Activated B cell treated with CpG ODN at 0.5 μM for 24 hours (primary cell): ENCODE measurements at regions of chr3 and their contacts with region 1.

Region 1: GRCh38 chr3:167705840-167706239 is 28.9 kb downstream of the PDCD10 start:
- DNase-seq: no peak
- ATAC-seq: no peak
- H3K4me3 Mint-ChIP-seq: no peak overlapping the region
- H3K27ac Mint-ChIP-seq: no peak overlapping the region
- H3K4me1 Mint-ChIP-seq: peaks cover under 1% of the 10 kb centered on the region
- H3K27me3 Mint-ChIP-seq: no peaks in the 10 kb centered on the region
- CTCF ChIP-seq: no peak

Region 2: GRCh38 chr3:167691366-167691765 is 14.5 kb before region 1 on chr3:
- CTCF ChIA-PET with region 1: no interaction called
- POLR2A ChIA-PET with region 1: no interaction called
- intact Hi-C with region 1: loop called (anchors 2 kb)
- DNase-seq: no peak
- ATAC-seq: peak; percentile 99
- H3K4me3 Mint-ChIP-seq: peak overlapping the region; percentile 41
- H3K27ac Mint-ChIP-seq: peak overlapping the region; percentile 24
- H3K4me1 Mint-ChIP-seq: peaks cover 20% of the 10 kb centered on the region
- H3K27me3 Mint-ChIP-seq: no peaks in the 10 kb centered on the region
- CTCF ChIP-seq: no peak